CD8-positive, alpha-beta T cell (primary cell): ENCODE measurements at regions of chr13 and their contacts with region 1.

Region 1: GRCh38 chr13:50911937-50912795 is 2.6 kb downstream of the RNASEH2B start:
- DNase-seq: peak; percentile 85 to 96 (median 92)
- ATAC-seq: peak; percentile 59
- H3K4me3 ChIP-seq: peak overlapping the region; percentile 78 to 89
- H3K4me3 Mint-ChIP-seq: peak overlapping the region; percentile 92
- H3K27ac ChIP-seq: peak overlapping the region in 1 of 2 experiments; percentile 86
- H3K27ac Mint-ChIP-seq: peak overlapping the region; percentile 92
- H3K4me1 ChIP-seq: peaks cover 48% of the 10 kb centered on the region
- H3K4me1 Mint-ChIP-seq: peaks cover 59% of the 10 kb centered on the region
- H3K27me3 ChIP-seq: no peaks in the 10 kb centered on the region
- H3K27me3 Mint-ChIP-seq: no peaks in the 10 kb centered on the region
- CTCF ChIP-seq: peak; percentile 87

Region 2: GRCh38 chr13:49792550-49793324 is 1119.4 kb before region 1 on chr13 and contains the start of gene KPNA3:
- CTCF ChIA-PET with region 1: no interaction called
- POLR2A ChIA-PET with region 1: interaction called, 3 read pairs
- intact Hi-C with region 1: loop called (anchors 2 to 5 kb)
- DNase-seq: peak; percentile 92 to 98 (median 96)
- ATAC-seq: peak; percentile 91
- H3K4me3 ChIP-seq: peak within 1 kb of the TSS; percentile 83 to 99
- H3K4me3 Mint-ChIP-seq: peak within 1 kb of the TSS; percentile 95
- H3K27ac ChIP-seq: peak within 1 kb of the TSS; percentile 79 to 89
- H3K27ac Mint-ChIP-seq: peak within 1 kb of the TSS; percentile 96
- H3K4me1 ChIP-seq: peaks cover 21% of the 10 kb centered on the region
- H3K4me1 Mint-ChIP-seq: peaks cover 34% of the 10 kb centered on the region
- H3K27me3 ChIP-seq: peaks cover 0 to 7% of the 10 kb centered on the region in 2 experiments
- H3K27me3 Mint-ChIP-seq: peaks cover 9% of the 10 kb centered on the region
- CTCF ChIP-seq: no peak
- total RNA-seq, gene KPNA3: 22.3 to 23.5 TPM

Region 3: DNA sequence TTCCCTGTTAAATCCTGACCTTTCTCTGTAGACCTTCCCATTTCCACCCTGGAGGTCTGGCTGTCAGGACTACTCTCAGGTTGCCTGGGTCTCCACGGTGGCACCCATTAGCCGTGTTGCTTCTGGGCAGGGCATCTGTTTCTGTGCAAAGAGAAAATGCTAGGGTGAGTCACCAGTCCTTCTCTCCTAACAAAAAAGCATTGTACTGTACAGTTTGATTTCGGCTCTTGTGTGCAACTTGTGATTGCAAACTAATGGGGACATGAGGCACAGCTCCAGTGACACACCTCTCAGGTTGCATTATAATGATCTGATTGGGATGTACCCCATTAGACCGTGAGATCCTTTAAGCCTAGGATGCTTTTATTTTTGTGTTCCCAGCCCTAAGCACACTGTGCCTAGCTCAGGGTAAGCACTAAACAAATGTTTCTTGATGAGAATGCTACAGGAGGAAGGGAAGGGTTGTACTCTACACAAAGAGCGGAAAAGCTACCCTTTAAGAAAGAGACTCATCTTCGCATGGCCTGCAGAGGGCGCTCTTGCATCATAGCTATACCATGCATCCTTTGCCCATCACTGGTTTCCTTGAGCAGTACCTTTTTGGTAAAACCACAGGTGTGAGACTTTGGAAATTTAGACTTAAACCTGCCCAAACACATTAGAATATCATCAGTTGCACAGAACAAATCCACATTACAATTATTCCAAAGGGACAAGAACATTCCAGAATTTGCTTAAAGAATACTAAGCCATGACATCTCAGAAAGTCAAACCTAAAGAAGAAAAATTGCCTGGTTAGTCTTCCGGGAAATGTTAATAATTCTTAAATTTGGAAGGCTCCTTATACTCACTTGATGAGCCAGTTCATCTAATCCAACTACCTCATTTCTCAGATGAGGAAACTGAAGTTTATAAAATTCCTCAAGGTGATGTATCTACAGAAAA is 935.6 kb before region 1 on chr13:
- CTCF ChIA-PET with region 1: interaction called, 33 read pairs
- POLR2A ChIA-PET with region 1: no interaction called
- intact Hi-C with region 1: loop called (anchors 1 kb)
- DNase-seq: peak; percentile 53 to 88 (median 78)
- ATAC-seq: peak; percentile 89
- H3K4me3 ChIP-seq: no peak overlapping the region
- H3K4me3 Mint-ChIP-seq: no peak overlapping the region
- H3K27ac ChIP-seq: no peak overlapping the region
- H3K27ac Mint-ChIP-seq: no peak overlapping the region
- H3K4me1 ChIP-seq: no peaks in the 10 kb centered on the region
- H3K4me1 Mint-ChIP-seq: no peaks in the 10 kb centered on the region
- H3K27me3 ChIP-seq: no peaks in the 10 kb centered on the region
- H3K27me3 Mint-ChIP-seq: no peaks in the 10 kb centered on the region
- CTCF ChIP-seq: peak; percentile 70

Region 4: DNA sequence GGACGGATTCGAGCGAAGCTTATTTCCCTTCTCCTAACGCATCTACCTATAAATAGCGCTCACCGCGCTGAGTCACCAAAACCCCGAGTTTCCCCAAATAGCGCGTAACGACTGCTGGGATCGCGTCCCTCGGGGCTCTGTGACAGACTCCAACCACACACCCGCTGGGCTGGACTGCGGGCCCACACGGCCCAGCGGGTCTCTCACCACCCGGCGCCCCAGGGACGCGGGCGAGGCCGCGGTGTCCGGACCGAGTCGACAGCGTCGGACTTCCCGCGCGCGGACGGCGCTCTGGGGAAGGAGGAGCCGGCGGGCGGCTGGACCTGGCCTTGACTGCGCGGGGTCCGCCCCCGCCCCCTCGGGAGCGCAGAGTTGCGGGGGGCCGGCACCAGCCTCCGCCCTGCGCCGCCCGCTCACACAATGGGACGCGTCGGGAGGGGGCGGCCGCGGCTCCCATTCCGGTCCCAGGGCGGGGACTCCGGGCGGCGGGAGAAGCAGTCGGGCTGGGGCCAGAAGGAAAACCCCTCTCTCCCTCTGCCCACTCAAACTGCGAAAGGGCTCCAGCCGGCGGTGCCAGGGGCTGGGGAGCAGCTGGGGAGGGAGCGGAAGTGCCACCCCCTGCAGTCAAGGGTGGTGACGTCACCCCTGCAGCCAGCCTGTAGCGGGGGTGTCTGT is 788.2 kb before region 1 on chr13:
- CTCF ChIA-PET with region 1: interaction called, 14 read pairs
- POLR2A ChIA-PET with region 1: interaction called, 26 read pairs
- intact Hi-C with region 1: loop called (anchors 1 to 2 kb)
- DNase-seq: peak in 8 of 9 experiments; percentile 43 to 91 (median 72)
- ATAC-seq: peak; percentile 65
- H3K4me3 ChIP-seq: peak overlapping the region; percentile 87 to 93
- H3K4me3 Mint-ChIP-seq: peak overlapping the region; percentile 90
- H3K27ac ChIP-seq: peak overlapping the region; percentile 90 to 92
- H3K27ac Mint-ChIP-seq: peak overlapping the region; percentile 96
- H3K4me1 ChIP-seq: peaks cover 24% of the 10 kb centered on the region
- H3K4me1 Mint-ChIP-seq: peaks cover 44% of the 10 kb centered on the region
- H3K27me3 ChIP-seq: peaks cover 12 to 19% of the 10 kb centered on the region in 2 experiments
- H3K27me3 Mint-ChIP-seq: peaks cover 15% of the 10 kb centered on the region
- CTCF ChIP-seq: no peak

Region 5: DNA sequence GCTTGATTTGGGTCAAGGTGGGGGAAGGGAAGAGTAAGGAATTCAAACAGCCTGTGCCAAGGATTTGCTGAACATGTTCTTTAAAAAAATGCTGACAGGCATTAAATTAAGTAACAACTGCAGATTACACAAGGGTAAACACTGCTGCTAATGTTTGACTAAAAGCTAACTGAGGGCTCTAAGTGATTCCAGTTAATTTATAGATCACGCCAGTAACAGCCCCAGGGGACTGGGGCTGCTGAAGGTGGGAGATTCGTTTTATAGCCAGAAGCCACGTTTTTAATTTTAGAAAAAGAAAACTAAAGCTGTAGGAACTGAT is 390.4 kb before region 1 on chr13:
- CTCF ChIA-PET with region 1: no interaction called
- POLR2A ChIA-PET with region 1: no interaction called
- intact Hi-C with region 1: no loop called
- DNase-seq: no peak
- ATAC-seq: no peak
- H3K4me3 ChIP-seq: no peak overlapping the region
- H3K4me3 Mint-ChIP-seq: no peak overlapping the region
- H3K27ac ChIP-seq: no peak overlapping the region
- H3K27ac Mint-ChIP-seq: no peak overlapping the region
- H3K4me1 ChIP-seq: no peaks in the 10 kb centered on the region
- H3K4me1 Mint-ChIP-seq: peaks cover 15% of the 10 kb centered on the region
- H3K27me3 ChIP-seq: no peaks in the 10 kb centered on the region
- H3K27me3 Mint-ChIP-seq: peaks cover 3% of the 10 kb centered on the region
- CTCF ChIP-seq: no peak

Region 6: DNA sequence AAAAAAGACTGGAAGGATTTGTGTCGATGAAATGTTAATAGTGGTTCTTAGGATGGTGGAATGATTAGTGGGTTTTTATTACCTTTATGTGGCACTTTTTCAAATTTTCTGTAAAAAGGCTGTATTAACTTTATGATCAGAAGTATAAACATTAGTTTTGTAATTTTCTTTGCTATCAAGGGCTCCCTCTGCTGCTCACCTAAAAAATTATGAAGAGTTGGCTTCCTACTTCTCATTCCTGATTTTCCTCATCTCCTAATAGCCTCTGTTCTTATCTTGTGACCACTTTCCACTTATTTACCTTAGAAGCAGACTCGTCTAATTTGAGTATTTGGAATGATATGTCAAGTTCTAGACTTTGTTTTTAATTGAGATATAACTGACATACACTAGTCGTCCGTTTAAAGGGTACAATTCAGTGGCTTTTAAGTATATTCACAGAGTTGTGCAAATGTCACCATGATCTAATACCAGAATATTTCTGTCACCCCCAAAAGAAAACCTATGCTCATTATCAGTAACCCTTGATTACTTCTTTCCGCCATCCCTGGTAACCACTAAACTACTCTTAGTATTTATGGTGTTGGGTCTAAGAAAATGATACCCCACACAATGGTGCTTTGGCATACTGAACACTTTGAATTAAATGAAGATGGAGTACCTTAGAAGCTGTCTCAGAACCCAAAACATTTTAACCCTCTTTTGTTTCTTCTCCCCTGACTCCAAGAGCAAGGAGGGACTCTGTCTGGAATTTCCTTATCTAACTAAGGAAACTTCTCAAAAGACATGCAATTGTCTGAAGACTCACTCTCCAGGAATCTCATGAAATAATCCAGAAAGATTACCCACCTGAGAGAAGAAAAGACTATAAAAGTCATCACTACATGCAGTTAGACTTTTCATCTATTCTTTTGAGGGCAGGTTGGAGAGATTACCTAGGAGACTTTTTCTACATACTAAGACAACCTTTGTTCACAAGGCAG is 380.0 kb before region 1 on chr13:
- CTCF ChIA-PET with region 1: interaction called, 4 read pairs
- POLR2A ChIA-PET with region 1: no interaction called
- intact Hi-C with region 1: loop called in 1 of 2 experiments (anchors 1 kb)
- DNase-seq: peak in 2 of 9 experiments; percentile 28 to 37
- ATAC-seq: no peak
- H3K4me3 ChIP-seq: no peak overlapping the region
- H3K4me3 Mint-ChIP-seq: no peak overlapping the region
- H3K27ac ChIP-seq: no peak overlapping the region
- H3K27ac Mint-ChIP-seq: no peak overlapping the region
- H3K4me1 ChIP-seq: no peaks in the 10 kb centered on the region
- H3K4me1 Mint-ChIP-seq: peaks cover 12% of the 10 kb centered on the region
- H3K27me3 ChIP-seq: no peaks in the 10 kb centered on the region
- H3K27me3 Mint-ChIP-seq: no peaks in the 10 kb centered on the region
- CTCF ChIP-seq: peak; percentile 29

Region 7: DNA sequence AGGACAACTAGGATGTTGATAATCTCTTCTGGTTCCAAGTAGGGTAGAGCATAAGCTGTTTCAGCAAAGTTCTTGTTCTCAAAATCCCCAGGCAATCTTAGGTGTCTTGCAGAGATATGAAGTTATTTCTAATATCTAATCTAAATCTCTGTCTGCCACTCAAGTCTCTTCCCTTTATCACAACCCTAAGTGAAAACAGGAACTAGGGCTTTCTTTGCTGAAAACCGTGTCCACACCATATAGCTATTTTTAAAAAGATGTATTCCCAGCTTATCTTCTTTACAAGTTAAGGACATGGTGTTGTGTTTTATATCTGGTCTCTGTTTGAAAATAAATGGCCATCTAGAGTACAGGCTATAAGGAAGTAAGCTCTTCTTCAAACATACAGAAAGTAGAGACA is 13.8 kb before region 1 on chr13:
- CTCF ChIA-PET with region 1: interaction called, 19 read pairs
- POLR2A ChIA-PET with region 1: interaction called, 26 read pairs
- intact Hi-C with region 1: loop called (anchors 1 to 2 kb)
- DNase-seq: no peak
- ATAC-seq: no peak
- H3K4me3 ChIP-seq: no peak overlapping the region
- H3K4me3 Mint-ChIP-seq: no peak overlapping the region
- H3K27ac ChIP-seq: no peak overlapping the region
- H3K27ac Mint-ChIP-seq: no peak overlapping the region
- H3K4me1 ChIP-seq: peaks cover 10% of the 10 kb centered on the region
- H3K4me1 Mint-ChIP-seq: peaks cover 14% of the 10 kb centered on the region
- H3K27me3 ChIP-seq: no peaks in the 10 kb centered on the region
- H3K27me3 Mint-ChIP-seq: no peaks in the 10 kb centered on the region
- CTCF ChIP-seq: no peak